ENCODE measurements at regions of chr17 and their contacts with region 1.

Region 1: GRCh38 chr17:40559954-40560591 is 5.2 kb downstream of the CCR7 start:
- DNase-seq: peak; percentile 95
- H3K4me3 Mint-ChIP-seq: peak overlapping the region; percentile 95
- H3K27ac Mint-ChIP-seq: peak overlapping the region; percentile 100
- H3K4me1 Mint-ChIP-seq: peaks cover 71% of the 10 kb centered on the region
- H3K27me3 Mint-ChIP-seq: no peaks in the 10 kb centered on the region

Region 2: GRCh38 chr17:40279407-40279806 is 280.7 kb before region 1 on chr17:
- intact Hi-C with region 1: no loop called
- DNase-seq: no peak
- H3K4me3 Mint-ChIP-seq: no peak overlapping the region
- H3K27ac Mint-ChIP-seq: no peak overlapping the region
- H3K4me1 Mint-ChIP-seq: peaks cover 33% of the 10 kb centered on the region
- H3K27me3 Mint-ChIP-seq: no peaks in the 10 kb centered on the region

Region 3: GRCh38 chr17:40362696-40363110 is 197.4 kb before region 1 on chr17:
- intact Hi-C with region 1: loop called (anchors 1 kb)
- DNase-seq: peak; percentile 96
- H3K4me3 Mint-ChIP-seq: peak overlapping the region; percentile 83
- H3K27ac Mint-ChIP-seq: peak overlapping the region; percentile 67
- H3K4me1 Mint-ChIP-seq: peaks cover 20% of the 10 kb centered on the region
- H3K27me3 Mint-ChIP-seq: no peaks in the 10 kb centered on the region

Region 4: DNA sequence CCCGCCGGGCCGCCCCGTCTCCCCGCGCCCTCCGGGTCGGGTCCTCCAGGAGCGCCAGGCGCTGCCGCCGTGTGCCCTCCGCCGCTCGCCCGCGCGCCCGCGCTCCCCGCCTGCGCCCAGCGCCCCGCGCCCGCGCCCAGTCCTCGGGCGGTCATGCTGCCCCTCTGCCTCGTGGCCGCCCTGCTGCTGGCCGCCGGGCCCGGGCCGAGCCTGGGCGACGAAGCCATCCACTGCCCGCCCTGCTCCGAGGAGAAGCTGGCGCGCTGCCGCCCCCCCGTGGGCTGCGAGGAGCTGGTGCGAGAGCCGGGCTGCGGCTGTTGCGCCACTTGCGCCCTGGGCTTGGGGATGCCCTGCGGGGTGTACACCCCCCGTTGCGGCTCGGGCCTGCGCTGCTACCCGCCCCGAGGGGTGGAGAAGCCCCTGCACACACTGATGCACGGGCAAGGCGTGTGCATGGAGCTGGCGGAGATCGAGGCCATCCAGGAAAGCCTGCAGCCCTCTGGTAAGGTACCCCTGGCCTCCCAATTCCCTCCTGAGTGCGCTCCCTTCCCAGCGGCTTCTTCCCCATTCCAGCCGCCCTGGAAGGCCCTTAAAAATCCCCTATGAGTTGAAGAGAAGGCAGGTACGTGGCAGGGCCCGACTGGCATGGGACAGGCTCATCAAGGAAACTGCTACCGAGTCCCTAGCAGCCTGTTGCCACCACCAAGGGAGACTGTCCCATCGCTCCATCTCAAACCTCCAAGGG is 116.3 kb before region 1 on chr17:
- intact Hi-C with region 1: loop called (anchors 1 kb)
- DNase-seq: peak; percentile 93
- H3K4me3 Mint-ChIP-seq: peak overlapping the region; percentile 81
- H3K27ac Mint-ChIP-seq: peak overlapping the region; percentile 89
- H3K4me1 Mint-ChIP-seq: peaks cover 58% of the 10 kb centered on the region
- H3K27me3 Mint-ChIP-seq: peaks cover 2% of the 10 kb centered on the region

Region 5: DNA sequence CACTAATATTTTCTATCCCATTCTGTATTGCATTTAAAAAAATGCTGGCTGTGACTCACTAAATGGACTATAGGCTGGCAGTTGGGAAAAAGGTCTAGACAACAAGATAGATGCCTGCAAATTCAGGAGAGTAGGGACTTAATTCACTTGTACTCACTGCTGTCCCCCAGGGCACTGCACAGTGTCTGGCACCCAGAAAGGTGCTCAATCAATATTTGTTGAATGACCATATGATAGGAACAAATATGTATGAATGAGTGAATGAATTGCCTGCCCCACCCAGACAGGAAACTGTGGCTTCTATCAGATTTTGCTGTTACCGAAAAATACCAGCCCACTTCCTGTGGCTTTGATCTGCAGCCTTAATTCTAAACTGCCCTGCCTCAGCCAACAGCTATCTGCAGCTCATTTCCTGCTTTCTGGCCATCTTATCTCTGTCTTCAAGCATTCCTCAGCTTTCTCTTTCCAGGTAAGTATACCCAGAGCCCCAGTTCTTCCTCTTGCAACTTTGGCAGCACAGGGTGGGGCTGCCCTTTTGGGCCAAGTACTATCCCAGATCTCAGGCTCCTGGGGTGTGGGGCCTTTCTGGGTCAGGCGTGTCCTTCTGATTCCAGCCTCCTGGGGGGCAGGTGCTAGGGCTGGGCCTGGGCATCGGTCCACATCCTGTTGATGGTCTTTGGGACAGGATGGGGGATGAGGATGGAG is 43.3 kb before region 1 on chr17:
- intact Hi-C with region 1: no loop called
- DNase-seq: peak; percentile 94
- H3K4me3 Mint-ChIP-seq: peak overlapping the region; percentile 87
- H3K27ac Mint-ChIP-seq: peak overlapping the region; percentile 94
- H3K4me1 Mint-ChIP-seq: peaks cover 71% of the 10 kb centered on the region
- H3K27me3 Mint-ChIP-seq: no peaks in the 10 kb centered on the region

Region 6: DNA sequence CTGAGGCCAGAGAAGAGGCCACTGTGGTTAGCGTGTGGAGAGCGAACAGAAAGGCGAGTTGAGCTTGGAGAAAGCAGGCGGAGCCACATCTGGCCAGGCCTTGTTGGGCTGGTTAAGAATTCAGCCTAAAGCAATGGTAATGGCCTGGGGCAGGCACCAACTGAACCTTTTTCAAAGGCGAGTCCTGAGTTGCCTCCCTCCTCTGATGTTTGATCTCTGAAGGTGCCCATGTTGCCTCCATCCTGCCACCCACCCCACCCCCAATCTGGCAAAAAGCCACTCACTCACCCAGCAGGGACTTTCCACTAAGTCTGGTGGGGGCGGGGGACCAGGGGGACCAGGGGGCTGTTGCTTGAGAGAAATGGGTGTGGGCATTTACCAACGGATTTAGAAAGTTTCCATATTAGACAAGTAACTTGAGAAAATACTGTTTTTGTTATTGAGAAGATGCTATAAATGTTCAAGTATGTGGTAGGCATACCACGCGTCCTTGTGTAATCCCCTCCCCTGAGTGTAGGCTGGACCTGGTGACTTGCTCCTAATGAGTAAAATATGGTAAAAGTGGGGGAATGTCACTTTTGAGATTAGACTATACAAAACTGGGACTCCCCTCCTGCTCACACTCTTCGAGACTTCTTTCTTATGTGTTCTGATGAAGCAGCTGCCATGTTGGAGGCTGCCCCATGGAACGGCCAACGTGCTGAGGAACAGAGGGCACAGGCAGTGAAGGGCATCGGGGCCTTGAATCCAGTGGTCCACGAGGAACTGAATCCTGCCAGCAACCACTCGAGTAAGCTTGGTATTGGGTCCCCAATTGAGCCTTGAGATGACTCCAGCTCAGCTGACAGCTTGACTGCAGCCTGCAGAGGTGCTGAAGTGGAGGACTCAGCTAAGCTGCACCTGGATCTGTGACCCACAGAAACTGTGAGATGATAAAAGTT is 28.8 kb before region 1 on chr17:
- intact Hi-C with region 1: loop called (anchors 1 kb)
- DNase-seq: peak; percentile 85
- H3K4me3 Mint-ChIP-seq: peak overlapping the region; percentile 85
- H3K27ac Mint-ChIP-seq: peak overlapping the region; percentile 99
- H3K4me1 Mint-ChIP-seq: peaks cover 71% of the 10 kb centered on the region
- H3K27me3 Mint-ChIP-seq: peaks cover 2% of the 10 kb centered on the region

Region 7: GRCh38 chr17:40582328-40582901 is 22.3 kb after region 1 on chr17:
- intact Hi-C with region 1: loop called (anchors 1 kb)
- DNase-seq: peak; percentile 90
- H3K4me3 Mint-ChIP-seq: peak overlapping the region; percentile 62
- H3K27ac Mint-ChIP-seq: peak overlapping the region; percentile 89
- H3K4me1 Mint-ChIP-seq: peaks cover 72% of the 10 kb centered on the region
- H3K27me3 Mint-ChIP-seq: no peaks in the 10 kb centered on the region

Region 8: GRCh38 chr17:40615295-40615988 is 55.4 kb after region 1 on chr17:
- intact Hi-C with region 1: loop called (anchors 1 kb)
- DNase-seq: peak; percentile 81
- H3K4me3 Mint-ChIP-seq: peak overlapping the region; percentile 47
- H3K27ac Mint-ChIP-seq: peak overlapping the region; percentile 85
- H3K4me1 Mint-ChIP-seq: peaks cover 67% of the 10 kb centered on the region
- H3K27me3 Mint-ChIP-seq: no peaks in the 10 kb centered on the region